ENCODE measurements at regions of chrX and their contacts with region 1.

Region 1: GRCh38 chrX:130916636-130917422 is 13.8 kb upstream of the ENOX2 start:
- DNase-seq: peak; percentile 25
- H3K4me3 Mint-ChIP-seq: no peak overlapping the region
- H3K27ac Mint-ChIP-seq: no peak overlapping the region
- H3K4me1 Mint-ChIP-seq: no peaks in the 10 kb centered on the region
- H3K27me3 Mint-ChIP-seq: peaks cover 4% of the 10 kb centered on the region

Region 2: DNA sequence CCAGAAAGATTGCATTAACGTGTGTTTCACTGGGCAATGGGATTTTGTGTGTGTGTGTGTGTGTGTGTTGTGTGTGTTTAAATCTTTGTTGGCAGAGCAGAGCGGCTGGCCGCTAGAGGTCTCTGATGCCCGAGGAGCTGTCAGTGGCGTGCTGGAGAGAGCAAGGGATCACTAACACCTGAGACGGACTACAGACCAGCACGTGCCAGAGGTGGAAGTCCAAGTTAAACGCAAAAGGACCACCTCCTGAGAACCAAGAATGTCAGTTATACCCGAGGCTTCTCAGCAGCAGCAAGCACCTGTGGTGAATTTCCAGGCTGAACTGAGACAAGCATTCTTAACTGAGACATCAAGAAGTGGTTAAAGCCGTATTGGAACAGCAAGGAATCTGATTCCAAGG is 586.1 kb before region 1 on chrX:
- CTCF ChIA-PET with region 1: interaction called, 10 read pairs
- POLR2A ChIA-PET with region 1: no interaction called
- DNase-seq: peak; percentile 44
- H3K4me3 Mint-ChIP-seq: no peak overlapping the region
- H3K27ac Mint-ChIP-seq: no peak overlapping the region
- H3K4me1 Mint-ChIP-seq: no peaks in the 10 kb centered on the region
- H3K27me3 Mint-ChIP-seq: peaks cover 15% of the 10 kb centered on the region

Region 3: DNA sequence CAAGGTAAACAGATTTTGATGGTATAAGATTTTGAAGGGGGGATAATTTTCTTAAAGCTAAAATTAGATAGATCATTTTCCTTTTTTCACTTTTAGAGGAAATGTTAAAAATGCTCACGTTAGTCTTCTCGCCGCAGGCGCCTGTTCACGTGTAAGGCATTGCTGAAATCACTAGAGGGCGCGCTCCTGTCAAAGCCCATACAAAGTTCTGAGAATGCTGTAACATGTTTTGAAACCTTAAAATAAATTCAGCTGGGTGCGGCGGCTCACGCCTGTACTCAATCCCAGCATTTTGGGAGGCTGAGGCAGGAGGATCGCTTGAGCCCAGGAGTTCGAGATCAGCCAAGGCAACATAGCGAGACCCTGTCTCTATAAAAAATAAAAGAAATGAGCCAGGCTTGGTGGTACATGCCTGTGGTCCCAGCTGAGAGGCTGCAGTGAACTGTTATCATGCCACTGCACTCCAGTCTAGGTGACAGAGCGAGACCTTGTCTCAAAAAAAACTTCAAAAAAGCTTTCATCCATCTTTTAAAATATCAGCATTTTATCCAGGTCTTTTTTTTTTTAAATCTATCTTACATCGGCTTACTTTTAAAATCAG is 377.0 kb before region 1 on chrX:
- CTCF ChIA-PET with region 1: interaction called, 18 read pairs
- POLR2A ChIA-PET with region 1: no interaction called
- DNase-seq: peak; percentile 43
- H3K4me3 Mint-ChIP-seq: no peak overlapping the region
- H3K27ac Mint-ChIP-seq: no peak overlapping the region
- H3K4me1 Mint-ChIP-seq: no peaks in the 10 kb centered on the region
- H3K27me3 Mint-ChIP-seq: no peaks in the 10 kb centered on the region

Region 4: DNA sequence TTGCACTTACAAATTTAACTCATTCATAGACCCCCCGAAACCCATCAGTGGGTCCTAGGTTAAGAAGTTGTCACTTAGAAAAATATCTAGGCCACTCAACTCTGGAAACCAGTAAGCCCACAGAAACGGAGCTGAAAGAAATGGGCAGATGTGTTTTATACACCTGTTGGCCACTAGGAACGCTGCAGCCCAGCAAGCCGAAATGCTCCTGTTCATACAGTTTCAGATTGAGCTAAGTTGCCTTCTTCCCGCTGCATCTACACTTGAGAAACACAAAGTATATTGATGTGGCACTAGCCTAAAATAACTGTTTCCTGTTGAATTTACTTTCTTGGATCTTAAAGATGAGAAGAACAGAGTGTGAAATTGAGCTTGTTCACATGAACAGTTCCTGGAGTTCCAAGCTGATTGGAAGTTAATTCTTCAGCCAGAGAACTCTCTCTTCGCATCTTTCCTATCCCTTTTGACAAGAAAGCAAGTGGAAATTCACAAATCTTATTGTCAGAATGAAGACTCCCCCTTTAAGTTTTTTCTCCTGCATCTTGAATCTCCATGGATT is 340.9 kb before region 1 on chrX:
- CTCF ChIA-PET with region 1: interaction called, 11 read pairs
- POLR2A ChIA-PET with region 1: no interaction called
- DNase-seq: peak; percentile 18
- H3K4me3 Mint-ChIP-seq: no peak overlapping the region
- H3K27ac Mint-ChIP-seq: no peak overlapping the region
- H3K4me1 Mint-ChIP-seq: no peaks in the 10 kb centered on the region
- H3K27me3 Mint-ChIP-seq: peaks cover 3% of the 10 kb centered on the region

Region 5: GRCh38 chrX:130937101-130937500 is 20.3 kb after region 1 on chrX:
- CTCF ChIA-PET with region 1: no interaction called
- POLR2A ChIA-PET with region 1: no interaction called
- DNase-seq: no peak
- H3K4me3 Mint-ChIP-seq: no peak overlapping the region
- H3K27ac Mint-ChIP-seq: no peak overlapping the region
- H3K4me1 Mint-ChIP-seq: no peaks in the 10 kb centered on the region
- H3K27me3 Mint-ChIP-seq: peaks cover 3% of the 10 kb centered on the region